CD4-positive, alpha-beta T cell (primary cell): ENCODE measurements at regions of chr1 and their contacts with region 1.

Region 1: GRCh38 chr1:220294846-220295301 is 22.6 kb upstream of the RAB3GAP2 start:
- DNase-seq: no peak
- ATAC-seq: no peak
- H3K4me3 ChIP-seq: no peak overlapping the region
- H3K4me3 Mint-ChIP-seq: no peak overlapping the region
- H3K27ac ChIP-seq: no peak overlapping the region
- H3K27ac Mint-ChIP-seq: no peak overlapping the region
- H3K4me1 ChIP-seq: no peaks in the 10 kb centered on the region
- H3K4me1 Mint-ChIP-seq: no peaks in the 10 kb centered on the region
- H3K27me3 ChIP-seq: peaks cover 4 to 5% of the 10 kb centered on the region in 2 experiments
- H3K27me3 Mint-ChIP-seq: peaks cover 33% of the 10 kb centered on the region
- CTCF ChIP-seq: no peak

Region 2: GRCh38 chr1:220344745-220345144 is 49.9 kb after region 1 on chr1:
- CTCF ChIA-PET with region 1: no interaction called
- POLR2A ChIA-PET with region 1: no interaction called
- intact Hi-C with region 1: no loop called
- DNase-seq: no peak
- ATAC-seq: no peak
- H3K4me3 ChIP-seq: no peak overlapping the region
- H3K4me3 Mint-ChIP-seq: no peak overlapping the region
- H3K27ac ChIP-seq: no peak overlapping the region
- H3K27ac Mint-ChIP-seq: no peak overlapping the region
- H3K4me1 ChIP-seq: no peaks in the 10 kb centered on the region
- H3K4me1 Mint-ChIP-seq: no peaks in the 10 kb centered on the region
- H3K27me3 ChIP-seq: peaks cover 2 to 3% of the 10 kb centered on the region in 2 experiments
- H3K27me3 Mint-ChIP-seq: no peaks in the 10 kb centered on the region
- CTCF ChIP-seq: no peak

Region 3: GRCh38 chr1:220398238-220398637 is 103.4 kb after region 1 on chr1:
- CTCF ChIA-PET with region 1: no interaction called
- POLR2A ChIA-PET with region 1: no interaction called
- intact Hi-C with region 1: no loop called
- DNase-seq: no peak
- ATAC-seq: no peak
- H3K4me3 ChIP-seq: no peak overlapping the region
- H3K4me3 Mint-ChIP-seq: no peak overlapping the region
- H3K27ac ChIP-seq: no peak overlapping the region
- H3K27ac Mint-ChIP-seq: no peak overlapping the region
- H3K4me1 ChIP-seq: no peaks in the 10 kb centered on the region
- H3K4me1 Mint-ChIP-seq: no peaks in the 10 kb centered on the region
- H3K27me3 ChIP-seq: no peaks in the 10 kb centered on the region
- H3K27me3 Mint-ChIP-seq: peaks cover 38% of the 10 kb centered on the region
- CTCF ChIP-seq: no peak

Region 4: GRCh38 chr1:220733090-220733601 is 438.3 kb after region 1 on chr1:
- CTCF ChIA-PET with region 1: no interaction called
- POLR2A ChIA-PET with region 1: interaction called, 4 read pairs
- intact Hi-C with region 1: loop called (anchors 5 to 10 kb)
- DNase-seq: peak; percentile 55 to 86 (median 67)
- ATAC-seq: peak; percentile 94
- H3K4me3 ChIP-seq: peak overlapping the region; percentile 11
- H3K4me3 Mint-ChIP-seq: peak overlapping the region; percentile 26
- H3K27ac ChIP-seq: no peak overlapping the region
- H3K27ac Mint-ChIP-seq: peak overlapping the region; percentile 23
- H3K4me1 ChIP-seq: peaks cover 12% of the 10 kb centered on the region
- H3K4me1 Mint-ChIP-seq: peaks cover 15% of the 10 kb centered on the region
- H3K27me3 ChIP-seq: no peaks in the 10 kb centered on the region
- H3K27me3 Mint-ChIP-seq: no peaks in the 10 kb centered on the region
- CTCF ChIP-seq: peak; percentile 77

Region 5: GRCh38 chr1:220776720-220777326 is 481.9 kb after region 1 on chr1:
- CTCF ChIA-PET with region 1: no interaction called
- POLR2A ChIA-PET with region 1: no interaction called
- intact Hi-C with region 1: loop called in 1 of 2 experiments (anchors 5 kb)
- DNase-seq: peak; percentile 40 to 73 (median 49)
- ATAC-seq: peak; percentile 52
- H3K4me3 ChIP-seq: no peak overlapping the region
- H3K4me3 Mint-ChIP-seq: no peak overlapping the region
- H3K27ac ChIP-seq: no peak overlapping the region
- H3K27ac Mint-ChIP-seq: no peak overlapping the region
- H3K4me1 ChIP-seq: peaks cover 4% of the 10 kb centered on the region
- H3K4me1 Mint-ChIP-seq: no peaks in the 10 kb centered on the region
- H3K27me3 ChIP-seq: peaks cover 0 to 5% of the 10 kb centered on the region in 2 experiments
- H3K27me3 Mint-ChIP-seq: peaks cover 36% of the 10 kb centered on the region
- CTCF ChIP-seq: peak; percentile 66